ENCODE measurements at regions of chr9 and their contacts with region 1.

Region 1: GRCh38 chr9:128863647-128864046 is 18.1 kb downstream of the KYAT1 start:
- H3K4me3 ChIP-seq: no peak overlapping the region
- H3K27ac ChIP-seq: no peak overlapping the region
- H3K4me1 ChIP-seq: no peaks in the 10 kb centered on the region; the same call in 1 of the 2 replicates
- CTCF ChIP-seq: peak; percentile 88

Region 2: GRCh38 chr9:128881901-128882681 is 18.4 kb after region 1 on chr9 and contains the starts of genes KYAT1 and LRRC8A:
- CTCF ChIA-PET with region 1: interaction called, 83 read pairs
- POLR2A ChIA-PET with region 1: no interaction called
- H3K4me3 ChIP-seq: peak within 1 kb of the TSS; percentile 87
- H3K27ac ChIP-seq: peak within 1 kb of the TSS; percentile 55
- H3K4me1 ChIP-seq: no peaks in the 10 kb centered on the region
- CTCF ChIP-seq: no peak

Measured in HEK293 (cell line).